Activated CD8-positive, alpha-beta memory T cell treated with anti-CD3 and anti-CD28 coated beads, Interleukin-2, amount 10 ng/mL, durations not matched to agents 7 days and 5 days (primary cell): ENCODE measurements at regions of chr1 and their contacts with region 1.

Region 1: GRCh38 chr1:241611063-241611462 is 29.1 kb downstream of the CHML start:
- DNase-seq: no peak
- ATAC-seq: peak; percentile 91
- H3K4me3 Mint-ChIP-seq: no peak overlapping the region
- H3K27ac Mint-ChIP-seq: no peak overlapping the region
- H3K4me1 Mint-ChIP-seq: peaks cover 17% of the 10 kb centered on the region
- H3K27me3 Mint-ChIP-seq: no peaks in the 10 kb centered on the region

Region 2: DNA sequence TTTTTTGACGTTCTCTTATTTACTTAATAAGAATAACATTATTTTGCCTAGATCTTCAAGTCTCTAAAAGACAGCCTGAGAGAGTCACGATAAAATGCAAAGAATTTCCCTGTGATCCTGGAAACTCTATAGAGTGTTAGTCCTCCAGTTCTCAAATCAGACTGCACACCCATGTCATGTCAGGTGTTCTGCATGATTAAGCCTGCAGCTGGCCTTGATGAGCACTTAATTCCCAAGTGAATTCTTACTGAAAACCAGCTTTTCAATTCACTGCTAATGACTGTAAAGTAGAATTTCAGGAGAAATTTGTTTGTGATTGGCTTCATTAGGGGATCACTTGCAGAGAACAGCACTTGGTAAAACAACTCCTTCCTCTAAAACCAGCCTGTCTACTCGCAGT is 12.8 kb before region 1 on chr1:
- CTCF ChIA-PET with region 1: interaction called, 10 read pairs
- DNase-seq: no peak
- ATAC-seq: no peak
- H3K4me3 Mint-ChIP-seq: no peak overlapping the region
- H3K27ac Mint-ChIP-seq: no peak overlapping the region
- H3K4me1 Mint-ChIP-seq: peaks cover 1% of the 10 kb centered on the region
- H3K27me3 Mint-ChIP-seq: no peaks in the 10 kb centered on the region

Region 3: GRCh38 chr1:241627453-241628259 is 16.6 kb after region 1 on chr1:
- CTCF ChIA-PET with region 1: interaction called, 25 read pairs
- DNase-seq: peak; percentile 53
- ATAC-seq: peak; percentile 80
- H3K4me3 Mint-ChIP-seq: peak overlapping the region; percentile 42
- H3K27ac Mint-ChIP-seq: peak overlapping the region; percentile 65
- H3K4me1 Mint-ChIP-seq: peaks cover 12% of the 10 kb centered on the region
- H3K27me3 Mint-ChIP-seq: no peaks in the 10 kb centered on the region